Activated CD8-positive, alpha-beta memory T cell treated with anti-CD3 and anti-CD28 coated beads, Interleukin-2, amount 10 ng/mL, durations not matched to agents 7 days and 5 days (primary cell): ENCODE measurements at regions of chr9 and their contacts with region 1.

Region 1: DNA sequence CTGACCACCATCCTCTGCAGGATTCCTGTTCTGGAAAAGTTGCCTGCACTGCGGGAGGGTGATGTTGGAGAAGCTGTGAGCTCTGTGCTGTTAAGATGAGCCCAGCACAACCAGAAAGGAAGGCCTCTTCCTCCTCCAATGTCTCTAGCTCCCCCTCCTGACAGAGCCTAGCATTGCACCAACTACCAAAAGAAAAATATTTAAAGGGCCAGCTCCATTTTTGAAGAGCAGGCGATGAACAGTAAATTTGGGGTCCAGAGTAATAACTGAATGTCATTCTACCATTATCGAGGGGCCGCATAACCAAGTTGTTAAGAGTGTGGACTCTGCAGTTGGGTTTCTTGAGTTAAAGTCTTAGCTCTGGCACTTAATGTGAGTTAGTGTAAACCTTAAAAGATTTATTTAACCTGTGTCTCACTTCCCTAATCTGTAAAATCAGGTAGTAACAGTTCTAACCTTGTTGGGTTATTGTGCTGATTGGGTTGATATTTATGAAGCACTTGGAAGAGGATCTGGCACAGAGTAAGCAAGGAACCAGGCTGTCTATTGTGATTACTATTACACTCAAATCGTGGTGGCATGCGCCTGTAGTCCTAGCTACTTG is 3.9 kb downstream of the TEX53 start:
- DNase-seq: peak; percentile 89
- ATAC-seq: peak; percentile 88
- H3K4me3 Mint-ChIP-seq: no peak overlapping the region
- H3K27ac Mint-ChIP-seq: peak overlapping the region; percentile 55
- H3K4me1 Mint-ChIP-seq: peaks cover 24% of the 10 kb centered on the region
- H3K27me3 Mint-ChIP-seq: no peaks in the 10 kb centered on the region

Region 2: GRCh38 chr9:114413861-114414301 is 239.8 kb before region 1 on chr9:
- CTCF ChIA-PET with region 1: interaction called, 207 read pairs
- DNase-seq: no peak
- ATAC-seq: no peak
- H3K4me3 Mint-ChIP-seq: no peak overlapping the region
- H3K27ac Mint-ChIP-seq: no peak overlapping the region
- H3K4me1 Mint-ChIP-seq: peaks cover 28% of the 10 kb centered on the region
- H3K27me3 Mint-ChIP-seq: no peaks in the 10 kb centered on the region

Region 3: DNA sequence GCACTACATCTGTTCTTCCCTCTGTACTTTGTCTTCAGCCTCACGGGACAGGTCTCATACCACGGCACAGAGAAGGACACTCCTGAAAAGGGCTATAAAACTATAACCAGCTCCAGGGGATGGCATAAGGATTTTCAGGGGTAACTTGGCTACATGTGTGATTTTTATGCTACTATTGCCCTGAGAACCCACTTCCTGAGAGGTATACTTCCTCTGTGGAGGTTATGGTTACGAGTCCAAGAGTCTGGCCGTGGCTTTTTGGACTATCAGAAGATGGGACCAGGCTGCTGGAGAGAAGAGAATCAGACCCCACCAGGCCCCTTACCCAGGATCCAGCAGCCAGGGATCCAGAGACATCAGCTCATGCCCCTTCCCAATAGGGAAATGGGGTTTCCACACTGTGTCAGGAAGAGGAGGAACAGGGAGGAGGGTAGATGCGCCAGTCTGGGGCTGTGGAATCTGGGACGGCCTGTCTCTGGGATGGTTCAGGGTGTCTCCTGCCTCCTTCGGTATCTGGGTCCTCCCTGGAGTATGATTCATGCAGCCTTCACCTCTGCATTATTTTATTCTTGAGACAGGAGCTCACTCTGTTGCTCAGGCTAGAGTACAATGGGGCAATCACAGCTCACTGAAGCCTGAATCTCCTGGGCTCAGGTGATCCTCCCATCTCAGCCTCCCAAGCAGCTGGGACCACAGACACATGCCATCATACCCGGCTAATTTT is 178.1 kb before region 1 on chr9:
- CTCF ChIA-PET with region 1: interaction called, 14 read pairs
- DNase-seq: no peak
- ATAC-seq: peak; percentile 65
- H3K4me3 Mint-ChIP-seq: no peak overlapping the region
- H3K27ac Mint-ChIP-seq: peak overlapping the region; percentile 19
- H3K4me1 Mint-ChIP-seq: peaks cover 18% of the 10 kb centered on the region
- H3K27me3 Mint-ChIP-seq: no peaks in the 10 kb centered on the region

Region 4: DNA sequence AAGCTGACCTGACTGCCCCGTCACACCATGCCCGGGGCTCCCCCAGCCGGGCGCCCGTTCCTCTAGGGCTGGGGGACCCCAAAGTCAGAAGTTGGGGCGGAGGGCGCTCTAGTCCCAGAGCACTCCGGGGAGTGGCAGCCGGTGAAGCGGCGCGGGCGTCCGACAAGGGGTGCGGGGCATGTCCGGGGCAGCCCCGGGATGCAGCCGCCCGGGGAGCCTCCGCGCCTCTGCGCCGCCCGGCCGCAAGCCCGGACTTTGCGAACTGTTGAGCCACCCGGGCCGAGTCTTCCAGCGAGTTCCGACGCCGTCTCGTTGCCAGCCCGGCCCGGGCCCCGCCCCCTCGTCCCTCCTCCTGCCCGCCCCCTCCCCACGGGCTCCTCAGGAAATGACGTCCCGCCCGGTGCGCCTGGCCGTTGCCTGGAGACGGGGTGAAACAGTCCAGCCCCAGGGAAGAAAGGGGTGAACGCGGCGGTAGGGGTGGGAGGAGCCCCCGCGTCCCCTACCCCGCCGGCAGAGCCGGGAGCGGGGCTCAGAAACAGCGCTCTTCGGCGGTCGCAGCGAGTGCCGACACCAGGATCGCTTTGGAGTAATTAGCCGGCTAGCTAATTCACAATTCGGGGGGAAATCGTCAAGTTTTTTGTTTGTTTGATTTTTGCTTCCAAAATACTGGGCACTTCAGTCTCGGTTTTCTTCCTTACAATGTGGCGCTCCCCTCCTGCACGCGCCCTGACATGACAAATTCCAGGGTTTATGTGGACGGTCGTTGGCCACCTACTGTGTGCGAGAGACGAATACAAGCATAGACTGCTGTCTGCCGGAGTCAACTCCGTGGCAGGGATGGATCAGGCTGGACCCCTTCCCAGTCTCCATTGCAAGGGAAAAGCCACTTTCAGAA is 148.2 kb before region 1 on chr9 and contains the start of gene WHRN:
- CTCF ChIA-PET with region 1: interaction called, 27 read pairs
- DNase-seq: peak; percentile 91
- ATAC-seq: peak; percentile 84
- H3K4me3 Mint-ChIP-seq: peak within 1 kb of the TSS; percentile 74
- H3K27ac Mint-ChIP-seq: peak within 1 kb of the TSS; percentile 63
- H3K4me1 Mint-ChIP-seq: peaks cover 30% of the 10 kb centered on the region
- H3K27me3 Mint-ChIP-seq: peaks cover 60% of the 10 kb centered on the region
- total RNA-seq, gene WHRN: 6.5 to 12.4 TPM

Region 5: GRCh38 chr9:114587385-114588202 is 66.1 kb before region 1 on chr9 and contains the start of gene ATP6V1G1:
- CTCF ChIA-PET with region 1: interaction called, 119 read pairs
- DNase-seq: peak; percentile 100
- ATAC-seq: peak; percentile 95
- H3K4me3 Mint-ChIP-seq: peak within 1 kb of the TSS; percentile 96
- H3K27ac Mint-ChIP-seq: peak within 1 kb of the TSS; percentile 96
- H3K4me1 Mint-ChIP-seq: peaks cover 46% of the 10 kb centered on the region
- H3K27me3 Mint-ChIP-seq: no peaks in the 10 kb centered on the region
- total RNA-seq, gene ATP6V1G1: 62.4 to 66.7 TPM

Region 6: GRCh38 chr9:114638404-114638803 is 15.3 kb before region 1 on chr9:
- CTCF ChIA-PET with region 1: interaction called, 20 read pairs
- DNase-seq: no peak
- ATAC-seq: no peak
- H3K4me3 Mint-ChIP-seq: no peak overlapping the region
- H3K27ac Mint-ChIP-seq: no peak overlapping the region
- H3K4me1 Mint-ChIP-seq: no peaks in the 10 kb centered on the region
- H3K27me3 Mint-ChIP-seq: no peaks in the 10 kb centered on the region

Region 7: DNA sequence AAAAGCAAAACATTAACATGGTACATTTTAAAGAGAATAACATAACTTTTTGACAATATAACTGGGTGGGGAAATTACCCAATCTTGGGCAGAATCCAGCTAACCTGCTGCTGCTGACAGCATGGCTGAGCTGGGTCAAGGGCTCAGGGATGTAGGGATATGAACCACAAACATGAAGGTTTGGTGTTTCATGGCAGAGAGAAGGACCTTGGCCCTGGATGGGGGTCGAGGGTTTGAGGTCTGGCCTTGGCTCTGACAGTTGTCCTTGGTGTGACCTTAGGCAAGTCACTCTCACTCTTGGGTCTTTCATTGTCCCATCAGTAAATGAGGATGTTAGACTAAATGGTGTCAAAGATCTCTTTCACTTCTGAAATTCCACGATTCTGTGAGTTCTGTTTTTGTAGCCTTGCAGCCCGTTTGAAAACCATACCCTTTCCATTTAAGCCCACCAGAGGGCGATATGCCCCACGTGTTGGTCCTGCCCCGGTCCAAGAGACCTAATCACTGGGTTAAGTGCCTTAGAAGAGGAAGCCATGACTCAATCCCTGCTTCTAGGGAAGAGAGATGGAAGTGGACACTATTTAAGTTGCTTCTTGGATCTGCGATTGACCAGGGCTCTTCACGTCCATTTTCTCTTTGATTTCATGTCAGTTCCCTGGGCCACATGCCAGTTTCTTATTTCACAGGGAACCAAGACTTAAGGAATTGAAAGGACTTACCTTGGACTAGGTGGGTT is 85.1 kb after region 1 on chr9:
- CTCF ChIA-PET with region 1: no interaction called
- DNase-seq: peak; percentile 84
- ATAC-seq: peak; percentile 83
- H3K4me3 Mint-ChIP-seq: no peak overlapping the region
- H3K27ac Mint-ChIP-seq: peak overlapping the region; percentile 89
- H3K4me1 Mint-ChIP-seq: peaks cover 58% of the 10 kb centered on the region
- H3K27me3 Mint-ChIP-seq: peaks cover 5% of the 10 kb centered on the region